ENCODE measurements at regions of chr5 and their contacts with region 1.

Region 1: DNA sequence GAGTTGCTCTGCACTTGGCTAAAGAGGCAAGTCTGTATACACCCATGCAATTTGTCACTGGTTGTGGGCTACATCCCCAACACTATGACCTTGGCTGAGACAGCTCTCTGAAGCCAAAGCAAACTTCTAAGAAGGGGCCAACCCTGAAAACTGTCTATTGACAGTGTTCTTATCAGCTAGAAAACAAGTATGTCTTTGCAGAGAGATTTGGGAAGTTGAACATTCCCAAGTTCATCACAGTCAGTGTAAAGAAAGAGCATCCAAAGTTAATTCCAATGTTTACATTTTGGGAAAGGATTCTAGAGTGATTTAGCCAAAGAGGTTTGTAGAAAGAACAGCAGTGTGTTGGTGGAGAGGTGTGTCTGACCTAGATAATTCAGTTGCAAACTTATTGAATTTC is 711.1 kb upstream of the CHD1 start:
- DNase-seq: no peak
- ATAC-seq: no peak
- H3K4me3 ChIP-seq: no peak overlapping the region
- H3K27ac ChIP-seq: no peak overlapping the region
- H3K4me1 ChIP-seq: no peaks in the 10 kb centered on the region
- H3K27me3 ChIP-seq: no peaks in the 10 kb centered on the region
- CTCF ChIP-seq: no peak
- POLR2A ChIP-seq: no peak
- RAD21 ChIP-seq: no peak

Region 2: GRCh38 chr5:99614881-99615280 is 25.0 kb before region 1 on chr5:
- CTCF ChIA-PET with region 1: no interaction called
- POLR2A ChIA-PET with region 1: no interaction called
- dilution Hi-C with region 1: no loop called
- in situ Hi-C with region 1: no loop called
- intact Hi-C with region 1: loop called (anchors 1 kb)
- DNase-seq: no peak
- ATAC-seq: no peak
- H3K4me3 ChIP-seq: no peak overlapping the region
- H3K27ac ChIP-seq: no peak overlapping the region
- H3K4me1 ChIP-seq: no peaks in the 10 kb centered on the region
- H3K27me3 ChIP-seq: no peaks in the 10 kb centered on the region
- CTCF ChIP-seq: no peak
- POLR2A ChIP-seq: no peak
- RAD21 ChIP-seq: no peak

Measured in IMR-90 (cell line).